ENCODE measurements at regions of chr2 and their contacts with region 1.

Region 1: DNA sequence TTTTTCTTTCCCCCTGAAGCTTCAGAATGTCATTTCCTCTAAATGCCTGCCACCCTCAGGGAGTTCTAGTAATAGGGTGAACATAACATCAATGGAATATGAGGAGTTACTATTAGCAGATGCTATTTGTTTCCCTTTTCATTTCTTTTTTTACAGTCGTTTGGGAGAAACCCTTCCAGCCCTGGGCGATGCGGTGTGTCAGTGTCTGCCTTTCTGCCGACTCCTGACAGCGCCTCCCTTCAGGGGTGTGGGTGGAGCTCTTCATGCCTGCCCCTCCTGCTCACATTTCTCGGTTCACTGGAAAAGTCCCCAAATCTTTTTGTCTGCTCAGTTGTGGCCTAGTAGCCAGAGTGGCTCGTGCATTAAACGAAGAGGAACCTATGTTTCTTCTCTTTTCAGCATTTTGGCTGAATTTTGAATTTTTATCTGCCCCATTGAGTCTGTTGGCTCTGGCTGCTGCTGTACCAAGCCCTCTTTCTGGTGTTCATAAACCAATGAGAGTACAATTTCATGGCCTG is 72.3 kb downstream of the FMNL2 start:
- DNase-seq: peak; percentile 55
- ATAC-seq: peak in 1 of 2 donors; percentile 44
- H3K4me3 ChIP-seq: peak overlapping the region; percentile 14 to 40 (median 24)
- H3K27ac ChIP-seq: peak overlapping the region; percentile 71 to 86 (median 80)
- H3K4me1 ChIP-seq: peaks cover 91 to 94% of the 10 kb centered on the region in 2 donors
- H3K27me3 ChIP-seq: no peaks in the 10 kb centered on the region
- CTCF ChIP-seq: no peak
- POLR2A ChIP-seq: peak in 1 of 2 donors; percentile 52

Region 2: GRCh38 chr2:152093464-152093863 is 313.8 kb before region 1 on chr2:
- in situ Hi-C with region 1: no loop called
- intact Hi-C with region 1: no loop called
- DNase-seq: no peak
- ATAC-seq: no peak
- H3K4me3 ChIP-seq: no peak overlapping the region
- H3K27ac ChIP-seq: no peak overlapping the region
- H3K4me1 ChIP-seq: peaks cover 7 to 10% of the 10 kb centered on the region in 2 donors
- H3K27me3 ChIP-seq: peaks cover 0 to 17% (median 3%) of the 10 kb centered on the region in 3 donors
- CTCF ChIP-seq: no peak
- POLR2A ChIP-seq: no peak

Region 3: DNA sequence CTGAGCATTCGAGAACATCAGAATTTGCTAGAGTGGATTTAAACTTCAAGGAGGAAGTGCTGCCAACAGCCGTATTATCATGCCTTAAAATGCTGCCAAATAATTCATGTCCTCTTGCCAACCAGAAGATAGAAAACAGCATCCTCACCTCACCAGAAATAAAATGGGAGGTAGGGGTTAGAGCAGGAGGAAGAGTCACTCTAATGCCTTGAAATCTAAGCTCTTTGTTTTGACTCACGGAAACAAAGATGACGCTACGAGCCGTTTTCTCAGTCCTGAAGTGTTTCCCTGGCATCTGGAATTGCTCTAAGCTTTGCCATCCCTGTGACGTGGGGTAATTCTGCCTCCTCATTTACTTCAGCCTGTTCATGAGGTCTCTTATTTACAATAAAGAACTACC is 212.9 kb after region 1 on chr2:
- in situ Hi-C with region 1: no loop called
- intact Hi-C with region 1: loop called (anchors 5 kb)
- DNase-seq: peak; percentile 29 to 35
- ATAC-seq: peak; percentile 81 to 89
- H3K4me3 ChIP-seq: no peak overlapping the region
- H3K27ac ChIP-seq: peak overlapping the region; percentile 73 to 81 (median 76)
- H3K4me1 ChIP-seq: peaks cover 19 to 51% of the 10 kb centered on the region in 2 donors
- H3K27me3 ChIP-seq: no peaks in the 10 kb centered on the region
- CTCF ChIP-seq: no peak
- POLR2A ChIP-seq: no peak

Region 4: GRCh38 chr2:152717228-152718075 is 310.2 kb after region 1 on chr2 and contains the start of gene PRPF40A:
- in situ Hi-C with region 1: no loop called
- intact Hi-C with region 1: loop called (anchors 1 kb)
- DNase-seq: peak; percentile 99
- ATAC-seq: peak; percentile 81 to 82
- H3K4me3 ChIP-seq: peak within 1 kb of the TSS; percentile 89 to 99 (median 94)
- H3K27ac ChIP-seq: peak within 1 kb of the TSS; percentile 95 to 99 (median 98)
- H3K4me1 ChIP-seq: peaks cover 40 to 46% of the 10 kb centered on the region in 2 donors
- H3K27me3 ChIP-seq: no peaks in the 10 kb centered on the region
- CTCF ChIP-seq: peak in 1 of 5 experiments; percentile 19
- POLR2A ChIP-seq: peak; percentile 79 to 83
- total RNA-seq, gene PRPF40A: 65.3 to 78.0 (median 69.9) TPM